Posterior vena cava (tissue), 2 donors: ENCODE measurements at regions of chr1 and their contacts with region 1.

Region 1: GRCh38 chr1:201447911-201448871 is 20.8 kb downstream of the PHLDA3 start:
- DNase-seq: peak; percentile 92

Region 2: GRCh38 chr1:201692555-201693394 is 244.6 kb after region 1 on chr1:
- intact Hi-C with region 1: loop called in 1 of 2 experiments (anchors 5 kb)
- DNase-seq: peak; percentile 14